K562 (cell line): ENCODE measurements at regions of chr6 and their contacts with region 1.

Region 1: DNA sequence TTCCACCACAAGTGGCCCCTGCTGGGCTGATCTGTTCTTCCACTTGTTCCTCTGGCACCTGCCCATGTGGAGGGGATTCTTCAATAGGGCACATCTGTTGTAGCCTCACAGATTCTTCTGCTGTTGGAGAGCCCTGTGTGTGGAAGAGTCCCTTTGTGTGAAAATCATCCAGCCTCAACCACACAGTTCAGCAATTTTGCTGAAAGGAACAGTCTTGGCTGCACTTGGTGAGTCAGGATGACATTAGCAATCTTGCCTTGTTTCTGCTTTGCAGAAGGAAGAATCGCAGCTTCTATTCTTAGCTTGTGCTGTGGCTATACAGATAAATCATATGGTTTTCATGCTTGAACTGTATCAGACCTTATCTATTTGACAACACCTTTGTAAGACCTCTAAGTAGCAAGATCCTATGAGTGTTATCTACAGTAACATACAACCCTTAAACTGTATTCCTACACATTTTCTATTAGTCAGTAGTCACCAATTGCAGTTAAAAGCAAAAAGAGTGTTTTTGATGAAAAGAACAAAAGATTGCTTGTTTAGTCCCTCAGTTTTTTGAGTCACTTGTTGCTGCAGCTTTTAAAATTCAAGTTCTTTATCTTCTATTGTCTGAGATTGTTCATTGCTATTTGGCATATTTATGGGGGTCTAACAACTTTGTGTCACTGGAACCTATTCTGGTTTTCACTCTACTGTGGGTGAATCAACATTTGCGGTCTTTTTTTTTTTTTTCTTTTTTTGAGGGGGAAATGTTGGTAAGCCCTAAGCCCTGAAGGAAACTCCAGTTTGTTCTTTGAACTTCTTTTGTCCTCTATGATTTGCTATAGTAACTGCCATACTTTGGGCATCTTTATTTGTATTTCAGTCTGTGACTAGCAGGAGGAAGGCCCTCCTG is 231.6 kb downstream of the TFAP2B start:
- DNase-seq: peak; percentile 86 to 94 (median 88)
- ATAC-seq: peak; percentile 97
- H3K4me3 ChIP-seq: no peak overlapping the region
- H3K27ac ChIP-seq: peak overlapping the region; percentile 93
- H3K4me1 ChIP-seq: peaks cover 7 to 53% of the 10 kb centered on the region in 2 experiments
- H3K27me3 ChIP-seq: no peaks in the 10 kb centered on the region
- CTCF ChIP-seq: 0 out of 6 replicates have a peak, but pooled peaks of 1 of the 3 experiments have one; percentile 2
- EP300 ChIP-seq: peak; percentile 100
- POLR2A ChIP-seq: no peak; the same call in 1 of the 2 replicates
- RAD21 ChIP-seq: peak; percentile 35 to 56

Region 2: GRCh38 chr6:50962213-50962759 is 87.9 kb before region 1 on chr6:
- CTCF ChIA-PET with region 1: no interaction called
- POLR2A ChIA-PET with region 1: interaction called, 4 read pairs
- in situ Hi-C with region 1: no loop called
- intact Hi-C with region 1: loop called (anchors 2 kb)
- DNase-seq: peak in 2 of 4 experiments; percentile 50 to 53
- ATAC-seq: peak; percentile 44
- H3K4me3 ChIP-seq: no peak overlapping the region
- H3K27ac ChIP-seq: peak overlapping the region; percentile 61
- H3K4me1 ChIP-seq: peaks cover 17 to 51% of the 10 kb centered on the region in 2 experiments
- H3K27me3 ChIP-seq: no peaks in the 10 kb centered on the region
- CTCF ChIP-seq: no peak
- EP300 ChIP-seq: peak; percentile 66; the same call in 1 of the 2 replicates
- POLR2A ChIP-seq: no peak
- RAD21 ChIP-seq: no peak

Region 3: DNA sequence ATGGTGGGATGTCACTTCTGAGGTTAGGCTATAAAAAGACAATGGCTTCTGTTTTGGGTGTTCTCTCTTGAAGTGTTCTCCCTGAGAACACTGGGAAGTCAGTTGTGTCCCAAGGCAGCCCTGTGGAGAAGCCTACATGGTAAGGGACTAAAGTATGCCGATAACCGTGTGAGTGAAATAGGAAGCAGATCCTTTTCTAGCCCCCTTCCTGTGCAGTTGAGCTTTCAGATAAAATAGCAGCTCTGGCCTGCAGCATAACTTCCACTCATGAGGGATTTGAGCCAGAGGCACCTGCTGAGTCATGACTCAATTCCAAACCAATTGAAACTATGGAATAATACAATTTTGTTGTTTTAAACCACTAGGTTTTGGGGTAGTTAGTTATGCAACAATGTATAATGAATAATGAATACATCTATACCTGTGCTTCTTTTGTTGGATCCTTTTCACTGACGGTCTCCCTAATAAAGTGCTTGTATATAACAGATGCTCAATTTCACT is 10.1 kb after region 1 on chr6:
- CTCF ChIA-PET with region 1: no interaction called
- POLR2A ChIA-PET with region 1: interaction called, 12 read pairs
- in situ Hi-C with region 1: no loop called
- intact Hi-C with region 1: no loop called
- DNase-seq: peak in 3 of 4 experiments; percentile 27 to 55 (median 39)
- ATAC-seq: peak; percentile 71
- H3K4me3 ChIP-seq: no peak overlapping the region
- H3K27ac ChIP-seq: peak overlapping the region; percentile 53; the same call in 2 of the 3 replicates
- H3K4me1 ChIP-seq: peaks cover 0 to 25% of the 10 kb centered on the region in 2 experiments; a peak in 3 of 5 replicates
- H3K27me3 ChIP-seq: no peaks in the 10 kb centered on the region
- CTCF ChIP-seq: no peak
- EP300 ChIP-seq: no peak
- POLR2A ChIP-seq: no peak
- RAD21 ChIP-seq: no peak

Region 4: DNA sequence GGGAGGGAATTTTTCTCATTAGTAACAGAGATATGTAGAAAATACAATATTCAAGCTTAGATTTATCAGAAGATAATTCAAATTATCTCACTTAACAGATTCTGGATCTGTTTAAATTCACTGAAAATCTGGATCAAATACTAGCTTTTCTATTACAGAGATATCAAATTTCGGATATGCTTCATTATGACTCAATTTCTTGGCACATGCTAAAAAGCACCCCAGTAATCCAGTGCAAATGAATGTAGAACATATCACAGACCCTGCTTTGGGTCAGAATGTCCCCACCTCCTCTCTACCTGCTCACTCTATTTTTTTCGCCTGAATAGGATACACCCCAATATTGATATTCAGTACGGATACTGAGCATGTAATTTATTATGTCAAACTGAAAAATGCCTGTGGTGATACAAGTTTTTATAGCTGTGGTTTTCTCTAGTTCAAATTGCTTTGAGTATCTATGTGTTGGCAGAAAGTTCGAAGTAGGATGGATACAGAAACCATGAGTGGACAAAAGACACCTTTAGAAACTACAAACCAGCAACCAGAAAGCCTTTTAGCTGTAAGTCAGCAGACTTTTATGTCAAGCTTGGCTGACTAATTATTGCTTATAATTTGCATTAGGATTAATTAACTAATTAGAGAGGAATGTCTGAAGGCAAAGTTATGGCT is 58.5 kb after region 1 on chr6:
- CTCF ChIA-PET with region 1: no interaction called
- POLR2A ChIA-PET with region 1: interaction called, 4 read pairs
- in situ Hi-C with region 1: no loop called
- intact Hi-C with region 1: loop called (anchors 5 kb)
- DNase-seq: no peak
- ATAC-seq: no peak
- H3K4me3 ChIP-seq: no peak overlapping the region
- H3K27ac ChIP-seq: no peak overlapping the region
- H3K4me1 ChIP-seq: peaks cover 0 to 24% of the 10 kb centered on the region in 2 experiments; a peak in 2 of 5 replicates
- H3K27me3 ChIP-seq: no peaks in the 10 kb centered on the region
- CTCF ChIP-seq: no peak
- EP300 ChIP-seq: no peak
- POLR2A ChIP-seq: no peak
- RAD21 ChIP-seq: no peak

Region 5: GRCh38 chr6:51167468-51167867 is 117.2 kb after region 1 on chr6:
- CTCF ChIA-PET with region 1: no interaction called
- POLR2A ChIA-PET with region 1: no interaction called
- in situ Hi-C with region 1: no loop called
- intact Hi-C with region 1: loop called (anchors 5 kb)
- DNase-seq: peak; percentile 16 to 78 (median 49)
- ATAC-seq: peak; percentile 91
- H3K4me3 ChIP-seq: no peak overlapping the region
- H3K27ac ChIP-seq: peak overlapping the region; percentile 16; the same call in 1 of the 3 replicates
- H3K4me1 ChIP-seq: peaks cover 0 to 13% of the 10 kb centered on the region in 2 experiments; a peak in 2 of 5 replicates
- H3K27me3 ChIP-seq: no peaks in the 10 kb centered on the region
- CTCF ChIP-seq: no peak
- EP300 ChIP-seq: no peak; the same call in 1 of the 2 replicates
- POLR2A ChIP-seq: no peak
- RAD21 ChIP-seq: no peak